ENCODE measurements at regions of chr6 and their contacts with region 1.

Region 1: DNA sequence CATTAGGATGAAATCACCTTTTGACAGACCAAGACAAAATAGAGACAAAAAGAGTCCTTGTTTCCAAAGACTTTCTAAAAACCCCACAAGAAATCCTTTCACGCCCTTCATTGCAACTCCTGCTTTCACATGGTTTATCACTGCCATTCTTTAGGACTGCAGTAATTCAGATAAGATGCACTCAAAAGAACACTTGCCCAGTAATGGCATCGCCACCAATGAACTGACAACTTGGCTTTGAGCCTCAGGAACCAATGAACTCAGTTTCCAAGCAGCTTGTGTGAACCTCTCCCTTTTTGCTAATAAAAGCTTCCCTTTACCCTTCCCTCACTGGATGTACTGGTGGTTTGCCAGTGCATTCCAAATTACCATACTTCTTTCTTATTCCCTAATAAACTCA is 21.8 kb downstream of the OSTM1 start:
- DNase-seq: no peak
- H3K4me3 ChIP-seq: no peak overlapping the region
- H3K27ac ChIP-seq: no peak overlapping the region
- H3K4me1 ChIP-seq: no peaks in the 10 kb centered on the region
- H3K27me3 ChIP-seq: no peaks in the 10 kb centered on the region
- CTCF ChIP-seq: no peak
- EP300 ChIP-seq: no peak
- POLR2A ChIP-seq: no peak

Region 2: DNA sequence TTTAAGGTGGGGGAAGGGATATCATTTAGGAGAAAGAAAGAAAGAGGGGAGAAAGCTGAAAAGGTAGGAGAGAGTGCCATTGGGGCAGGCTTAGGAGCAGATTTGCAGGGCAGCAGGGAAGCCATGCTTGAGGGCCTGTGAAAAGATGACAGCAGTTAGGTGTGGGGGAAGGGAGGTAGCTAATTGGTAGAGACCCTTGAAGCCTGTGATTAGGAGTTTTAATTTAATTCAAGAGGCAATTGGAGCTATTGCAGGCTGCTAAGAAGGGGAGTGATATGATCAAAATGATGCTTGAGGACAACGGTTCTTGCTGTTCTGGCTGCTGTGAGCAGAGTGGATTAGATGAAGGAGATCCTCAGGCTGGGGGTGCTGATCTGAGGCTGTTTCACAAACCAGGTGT is 70.2 kb before region 1 on chr6:
- intact Hi-C with region 1: loop called in 2 of 4 experiments (anchors 5 to 10 kb)
- DNase-seq: no peak
- H3K4me3 ChIP-seq: no peak overlapping the region
- H3K27ac ChIP-seq: no peak overlapping the region
- H3K4me1 ChIP-seq: no peaks in the 10 kb centered on the region
- H3K27me3 ChIP-seq: no peaks in the 10 kb centered on the region
- CTCF ChIP-seq: no peak
- EP300 ChIP-seq: no peak
- POLR2A ChIP-seq: no peak